Sciatic nerve (tissue), 2 donors: ENCODE measurements at regions of chr3 and their contacts with region 1.

Region 1: DNA sequence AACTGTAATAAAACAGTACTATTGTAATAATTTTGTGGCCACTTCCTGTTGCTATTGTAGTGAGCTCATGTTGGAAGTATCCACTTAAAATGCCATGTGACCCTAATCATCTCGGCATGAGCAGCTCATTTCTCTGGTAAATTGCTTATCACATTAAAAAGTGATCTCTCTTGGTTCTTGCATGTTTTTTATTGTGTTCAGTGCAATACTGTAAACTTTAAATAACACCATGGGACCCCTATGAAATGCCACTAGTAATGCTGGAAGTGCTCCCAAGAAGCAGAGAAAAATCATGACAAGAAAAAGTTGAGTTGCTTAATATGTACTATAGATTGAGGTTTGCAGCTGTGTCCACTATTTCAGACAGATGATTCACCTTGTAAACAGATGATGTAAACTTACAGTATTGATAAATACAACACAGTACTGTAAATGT is 45.6 kb downstream of the NMD3 start:
- DNase-seq: no peak
- ATAC-seq: no peak

Region 2: GRCh38 chr3:160150525-160150924 is 1116.2 kb before region 1 on chr3:
- intact Hi-C with region 1: no loop called
- DNase-seq: no peak
- ATAC-seq: no peak

Region 3: GRCh38 chr3:161333696-161334095 is 66.9 kb after region 1 on chr3:
- intact Hi-C with region 1: loop called (anchors 2 kb)
- DNase-seq: no peak
- ATAC-seq: no peak

Region 4: GRCh38 chr3:161386991-161387746 is 120.4 kb after region 1 on chr3:
- intact Hi-C with region 1: no loop called
- DNase-seq: no peak
- ATAC-seq: no peak